Heart left ventricle (tissue), 16 donors: ENCODE measurements at regions of chr11 and their contacts with region 1.

Region 1: DNA sequence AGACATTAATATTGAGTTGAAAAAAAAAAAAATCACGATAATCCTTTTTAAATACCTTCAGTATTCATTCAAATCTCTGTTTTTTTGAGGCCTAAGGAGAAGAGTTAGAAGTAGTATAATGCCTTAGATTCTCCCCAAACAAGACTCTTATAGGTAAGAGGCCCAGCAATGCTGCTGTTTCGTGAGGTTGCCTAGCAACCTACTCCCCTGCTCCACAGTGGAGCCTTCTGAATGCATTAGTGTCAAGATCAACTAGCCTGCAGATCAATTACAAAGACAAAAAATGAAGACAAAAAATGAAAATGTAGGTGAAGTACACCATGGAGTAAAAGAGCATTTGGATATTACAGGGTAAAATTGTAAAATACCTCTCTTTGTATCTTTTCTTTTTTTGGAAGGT is 229.8 kb upstream of the LUZP2 start:
- DNase-seq: no peak
- ATAC-seq: no peak
- H3K4me3 ChIP-seq: no peak overlapping the region
- H3K27ac ChIP-seq: no peak overlapping the region
- H3K4me1 ChIP-seq: no peaks in the 10 kb centered on the region
- H3K27me3 ChIP-seq: no peaks in the 10 kb centered on the region
- CTCF ChIP-seq: no peak
- POLR2A ChIP-seq: no peak

Region 2: DNA sequence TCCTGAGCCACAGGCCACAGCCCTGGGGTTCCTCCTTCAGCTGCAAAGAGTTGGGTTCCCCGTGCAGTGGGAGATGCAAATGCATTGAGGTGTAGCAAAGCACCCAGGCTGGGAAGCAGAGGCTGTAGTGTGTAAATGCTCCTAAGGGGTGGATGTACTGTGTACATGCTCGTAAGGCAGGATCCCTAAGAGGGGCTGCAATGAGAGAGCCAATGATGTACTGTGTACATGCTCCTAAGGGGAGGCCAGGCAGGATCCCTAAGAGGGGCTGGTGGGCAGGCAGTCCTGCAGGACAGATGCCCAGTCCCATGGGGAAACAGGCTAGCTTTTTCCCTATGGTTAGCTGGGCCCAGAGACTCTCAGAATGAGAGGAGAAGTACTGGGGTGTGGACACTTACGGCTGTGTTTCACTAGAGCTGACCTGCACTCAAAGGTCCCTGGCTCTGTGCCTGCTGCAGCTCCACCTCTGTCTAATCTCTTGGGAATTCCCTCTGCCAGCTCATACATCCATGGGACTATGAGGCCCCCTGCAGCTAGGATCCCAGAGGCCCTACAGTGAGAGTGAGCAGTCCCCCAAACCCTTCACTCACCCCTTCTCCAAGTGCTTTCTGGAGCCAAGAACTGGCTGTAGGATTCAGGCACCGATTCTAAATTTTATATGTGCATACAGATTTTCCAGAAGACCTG is 32.0 kb before region 1 on chr11:
- intact Hi-C with region 1: loop called in 1 of 10 experiments (anchors 2 kb)
- DNase-seq: no peak
- ATAC-seq: peak in 1 of 4 donors; percentile 53
- H3K4me3 ChIP-seq: no peak overlapping the region
- H3K27ac ChIP-seq: no peak overlapping the region
- H3K4me1 ChIP-seq: no peaks in the 10 kb centered on the region
- H3K27me3 ChIP-seq: no peaks in the 10 kb centered on the region
- CTCF ChIP-seq: no peak
- POLR2A ChIP-seq: no peak

Region 3: DNA sequence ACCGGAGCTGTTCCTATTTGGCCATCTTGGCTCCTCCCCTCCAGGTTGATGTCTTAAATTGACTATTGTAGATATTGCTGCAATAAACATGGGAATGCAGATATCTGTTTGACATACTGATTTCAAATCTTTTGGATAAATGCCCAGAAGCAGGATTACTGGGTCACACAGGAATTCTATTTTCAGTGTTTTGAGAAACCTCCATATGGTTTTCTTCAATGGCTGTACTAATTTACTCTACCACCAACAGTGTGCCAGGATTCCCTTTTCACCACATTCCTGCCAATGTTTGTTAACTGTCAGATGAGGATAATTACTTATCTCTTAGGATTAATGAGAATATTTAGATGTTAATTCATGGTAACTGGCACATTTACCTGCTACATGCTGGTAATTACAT is 696.9 kb after region 1 on chr11:
- intact Hi-C with region 1: no loop called
- DNase-seq: no peak
- ATAC-seq: no peak
- H3K4me3 ChIP-seq: no peak overlapping the region
- H3K27ac ChIP-seq: no peak overlapping the region
- H3K4me1 ChIP-seq: no peaks in the 10 kb centered on the region
- H3K27me3 ChIP-seq: no peaks in the 10 kb centered on the region
- CTCF ChIP-seq: no peak
- POLR2A ChIP-seq: no peak